ENCODE measurements at regions of chr3 and their contacts with region 1.

Region 1: DNA sequence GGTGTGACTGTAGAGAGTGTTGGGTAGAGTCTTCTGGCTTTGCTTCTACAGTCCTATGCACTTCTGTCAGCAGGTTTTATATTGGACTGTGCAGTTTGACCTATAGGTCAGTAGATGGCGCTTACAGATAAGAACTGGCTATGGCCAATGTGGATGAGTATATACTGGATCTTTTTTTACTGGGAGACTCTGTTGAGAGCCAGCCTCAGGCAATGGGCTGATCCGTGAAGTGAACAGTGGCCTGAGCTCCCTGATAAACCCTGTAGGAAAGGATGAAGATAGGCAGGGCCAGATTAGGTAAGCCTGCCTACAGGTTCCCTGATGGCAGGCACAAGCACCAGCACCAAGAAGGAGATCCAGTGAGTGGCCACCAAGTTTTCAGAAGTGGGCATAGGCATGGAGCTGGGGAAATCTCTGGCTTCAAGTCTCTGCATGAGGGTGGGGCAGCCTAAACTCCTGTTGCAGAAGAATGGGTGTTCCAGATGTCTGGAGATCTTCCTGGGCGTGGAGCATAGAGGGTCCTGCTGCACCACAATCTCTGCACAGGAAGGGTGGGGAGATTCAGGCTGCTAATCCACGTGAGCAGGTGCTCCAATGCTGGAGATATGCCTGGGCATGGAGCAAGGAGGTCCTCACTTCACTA is 326.0 kb upstream of the SGO1 start:
- DNase-seq: peak; percentile 12
- H3K4me3 Mint-ChIP-seq: no peak overlapping the region
- H3K27ac Mint-ChIP-seq: no peak overlapping the region
- H3K4me1 Mint-ChIP-seq: peaks cover 8% of the 10 kb centered on the region
- H3K27me3 Mint-ChIP-seq: no peaks in the 10 kb centered on the region
- CTCF ChIP-seq: peak; percentile 39

Region 2: DNA sequence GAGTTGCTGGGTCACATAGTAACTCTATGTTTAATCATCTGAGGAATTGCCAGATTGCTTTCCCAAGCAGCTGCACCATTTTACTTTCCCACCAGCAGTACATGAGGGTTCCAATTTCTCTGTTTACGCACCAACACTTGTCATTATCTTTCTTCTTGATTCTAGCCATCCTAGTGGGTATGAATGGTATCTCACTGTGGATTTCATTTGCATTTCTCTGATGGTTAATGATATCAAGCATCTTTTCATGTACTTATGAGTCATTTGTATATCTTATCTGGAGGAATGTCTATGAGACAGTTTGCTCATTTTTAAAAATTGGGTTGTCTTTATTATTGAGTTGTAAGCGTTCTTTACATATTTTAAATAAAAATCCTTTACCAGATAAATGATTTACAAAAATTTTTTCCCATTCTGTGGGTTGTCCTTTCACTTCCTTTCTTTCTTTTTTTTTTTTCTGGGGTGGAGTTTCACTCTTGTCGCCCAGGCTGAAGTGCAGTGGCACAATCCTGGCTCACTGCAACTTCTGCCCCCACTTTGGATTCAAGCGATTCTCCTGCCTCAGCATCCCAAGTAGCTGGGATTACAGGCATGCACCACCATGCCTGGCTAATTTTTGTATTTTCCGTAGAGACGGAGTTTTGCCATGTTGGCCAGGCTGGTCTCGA is 317.1 kb before region 1 on chr3:
- CTCF ChIA-PET with region 1: no interaction called
- intact Hi-C with region 1: no loop called
- DNase-seq: no peak
- H3K4me3 Mint-ChIP-seq: no peak overlapping the region
- H3K27ac Mint-ChIP-seq: no peak overlapping the region
- H3K4me1 Mint-ChIP-seq: peaks cover 11% of the 10 kb centered on the region
- H3K27me3 Mint-ChIP-seq: no peaks in the 10 kb centered on the region
- CTCF ChIP-seq: no peak

Region 3: GRCh38 chr3:20340324-20340928 is 171.6 kb before region 1 on chr3:
- CTCF ChIA-PET with region 1: no interaction called
- intact Hi-C with region 1: loop called (anchors 5 kb)
- DNase-seq: peak; percentile 75
- H3K4me3 Mint-ChIP-seq: no peak overlapping the region
- H3K27ac Mint-ChIP-seq: no peak overlapping the region
- H3K4me1 Mint-ChIP-seq: no peaks in the 10 kb centered on the region
- H3K27me3 Mint-ChIP-seq: no peaks in the 10 kb centered on the region
- CTCF ChIP-seq: peak; percentile 63

Region 4: GRCh38 chr3:20739814-20740213 is 227.8 kb after region 1 on chr3:
- CTCF ChIA-PET with region 1: no interaction called
- intact Hi-C with region 1: loop called (anchors 2 kb)
- DNase-seq: no peak
- H3K4me3 Mint-ChIP-seq: no peak overlapping the region
- H3K27ac Mint-ChIP-seq: no peak overlapping the region
- H3K4me1 Mint-ChIP-seq: no peaks in the 10 kb centered on the region
- H3K27me3 Mint-ChIP-seq: no peaks in the 10 kb centered on the region
- CTCF ChIP-seq: no peak

Region 5: GRCh38 chr3:20930034-20930433 is 418.1 kb after region 1 on chr3:
- CTCF ChIA-PET with region 1: interaction called, 3 read pairs
- intact Hi-C with region 1: loop called (anchors 1 kb)
- DNase-seq: peak; percentile 45
- H3K4me3 Mint-ChIP-seq: no peak overlapping the region
- H3K27ac Mint-ChIP-seq: no peak overlapping the region
- H3K4me1 Mint-ChIP-seq: peaks cover 19% of the 10 kb centered on the region
- H3K27me3 Mint-ChIP-seq: no peaks in the 10 kb centered on the region
- CTCF ChIP-seq: peak; percentile 27

Region 6: GRCh38 chr3:21216598-21216997 is 704.6 kb after region 1 on chr3:
- CTCF ChIA-PET with region 1: no interaction called
- intact Hi-C with region 1: loop called (anchors 5 kb)
- DNase-seq: peak; percentile 30
- H3K4me3 Mint-ChIP-seq: no peak overlapping the region
- H3K27ac Mint-ChIP-seq: no peak overlapping the region
- H3K4me1 Mint-ChIP-seq: no peaks in the 10 kb centered on the region
- H3K27me3 Mint-ChIP-seq: no peaks in the 10 kb centered on the region
- CTCF ChIP-seq: peak; percentile 18

Region 7: GRCh38 chr3:21551019-21551418 is 1039.0 kb after region 1 on chr3:
- CTCF ChIA-PET with region 1: no interaction called
- intact Hi-C with region 1: loop called (anchors 5 kb)
- DNase-seq: peak; percentile 14
- H3K4me3 Mint-ChIP-seq: no peak overlapping the region
- H3K27ac Mint-ChIP-seq: no peak overlapping the region
- H3K4me1 Mint-ChIP-seq: no peaks in the 10 kb centered on the region
- H3K27me3 Mint-ChIP-seq: no peaks in the 10 kb centered on the region
- CTCF ChIP-seq: no peak